ENCODE measurements at regions of chr16 and their contacts with region 1.

Region 1: GRCh38 chr16:89217388-89218191 is at the start of gene ZNF778:
- DNase-seq: peak; percentile 84
- H3K4me3 ChIP-seq: peak within 1 kb of the TSS; percentile 86 to 95 (median 90)
- H3K27ac ChIP-seq: peak within 1 kb of the TSS; percentile 67
- H3K4me1 ChIP-seq: peaks cover 13% of the 10 kb centered on the region
- H3K27me3 ChIP-seq: no peaks in the 10 kb centered on the region
- CTCF ChIP-seq: no peak
- total RNA-seq, gene ZNF778: 8.5 to 10.2 TPM

Region 2: DNA sequence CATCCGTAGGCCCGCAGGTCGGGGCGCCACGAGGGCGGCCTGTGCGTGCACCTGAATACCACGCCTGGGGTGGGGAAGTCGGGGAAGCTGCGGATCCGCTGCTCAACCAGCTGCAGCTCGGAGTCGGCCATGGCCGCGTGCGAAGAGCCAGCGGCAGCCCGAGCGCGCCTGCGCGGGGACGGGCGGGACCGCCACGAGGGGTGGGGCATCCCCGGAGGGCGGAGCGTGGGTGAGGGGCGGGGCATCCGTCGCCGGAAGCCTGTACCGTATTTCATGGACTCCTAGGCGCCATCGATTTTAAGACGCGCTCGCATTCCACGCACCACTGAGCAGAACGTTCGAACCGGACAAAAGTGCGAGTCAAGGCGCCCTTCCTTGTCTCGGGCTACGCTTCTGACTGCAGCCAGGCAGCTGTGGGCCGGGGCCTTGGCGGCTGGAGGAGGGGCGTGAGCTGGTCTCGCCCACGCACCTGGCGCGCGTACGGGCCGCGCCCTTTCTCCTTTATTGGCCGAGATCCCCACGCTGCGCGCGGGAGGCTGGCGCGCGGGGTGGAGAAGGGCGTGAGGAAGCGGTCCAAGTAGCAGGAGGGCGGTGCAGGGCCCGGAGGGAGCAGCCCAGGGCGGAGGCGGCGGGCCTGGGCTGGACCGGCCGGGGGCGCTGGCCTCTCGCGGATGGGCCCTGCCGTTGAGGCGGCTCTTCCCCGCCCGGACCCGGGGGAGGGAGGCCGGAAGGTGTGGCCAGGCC is 405.6 kb before region 1 on chr16 and contains the start of gene APRT:
- CTCF ChIA-PET with region 1: no interaction called
- dilution Hi-C with region 1: no loop called
- in situ Hi-C with region 1: no loop called
- intact Hi-C with region 1: loop called (anchors 1 kb)
- DNase-seq: peak; percentile 91
- H3K4me3 ChIP-seq: peak within 1 kb of the TSS; percentile 50 to 69 (median 67)
- H3K27ac ChIP-seq: peak within 1 kb of the TSS; percentile 14
- H3K4me1 ChIP-seq: peaks cover 29% of the 10 kb centered on the region
- H3K27me3 ChIP-seq: no peaks in the 10 kb centered on the region
- CTCF ChIP-seq: peak in 1 of 2 donors; percentile 38
- total RNA-seq, gene APRT: 51.5 to 136 TPM

Region 3: DNA sequence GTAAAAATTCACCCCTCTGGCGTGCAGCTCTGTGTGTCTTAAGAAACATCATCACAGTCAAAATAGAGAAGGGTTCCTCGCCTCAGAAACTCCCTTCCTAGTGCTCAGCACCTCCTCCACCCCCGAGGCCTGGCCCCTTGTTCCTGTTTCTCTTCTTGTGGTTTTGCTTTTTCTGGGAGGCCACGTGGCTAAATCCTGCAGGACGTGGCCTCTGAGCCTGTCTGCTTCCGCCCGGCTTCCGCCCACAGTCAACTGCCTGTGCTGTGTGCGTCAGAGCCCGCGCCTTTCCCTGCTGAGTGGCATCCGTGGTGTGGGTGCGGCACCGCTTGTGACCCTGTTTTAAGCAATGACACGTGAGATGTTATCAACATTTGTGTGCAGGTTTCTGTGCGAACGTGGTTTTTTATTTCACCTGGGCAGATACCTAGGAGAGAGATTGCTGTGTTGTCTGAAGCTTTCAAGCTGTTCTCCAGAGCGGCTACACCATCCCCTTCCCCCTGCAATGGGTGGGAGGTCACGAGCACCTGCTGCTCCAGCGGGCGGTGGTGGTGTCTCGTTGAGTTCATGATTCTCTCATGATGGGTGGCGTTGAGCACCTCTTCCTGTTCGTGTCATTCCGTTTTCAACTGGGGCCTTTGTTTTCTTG is 102.3 kb before region 1 on chr16:
- CTCF ChIA-PET with region 1: no interaction called
- dilution Hi-C with region 1: loop called (anchors 5 kb)
- in situ Hi-C with region 1: no loop called
- intact Hi-C with region 1: no loop called
- DNase-seq: peak; percentile 61
- H3K4me3 ChIP-seq: no peak overlapping the region
- H3K27ac ChIP-seq: no peak overlapping the region
- H3K4me1 ChIP-seq: peaks cover 17% of the 10 kb centered on the region
- H3K27me3 ChIP-seq: no peaks in the 10 kb centered on the region
- CTCF ChIP-seq: no peak

Region 4: GRCh38 chr16:89171463-89172170 is 46.0 kb before region 1 on chr16 and contains the start of gene CDH15:
- CTCF ChIA-PET with region 1: no interaction called
- dilution Hi-C with region 1: no loop called
- in situ Hi-C with region 1: no loop called
- intact Hi-C with region 1: loop called (anchors 1 kb)
- DNase-seq: peak; percentile 92
- H3K4me3 ChIP-seq: peak within 1 kb of the TSS in 2 of 3 experiments; percentile 23 to 42
- H3K27ac ChIP-seq: no peak within 1 kb of the TSS
- H3K4me1 ChIP-seq: peaks cover 26% of the 10 kb centered on the region
- H3K27me3 ChIP-seq: no peaks in the 10 kb centered on the region
- CTCF ChIP-seq: no peak
- total RNA-seq, gene CDH15: 0.14 to 0.33 TPM

Region 5: DNA sequence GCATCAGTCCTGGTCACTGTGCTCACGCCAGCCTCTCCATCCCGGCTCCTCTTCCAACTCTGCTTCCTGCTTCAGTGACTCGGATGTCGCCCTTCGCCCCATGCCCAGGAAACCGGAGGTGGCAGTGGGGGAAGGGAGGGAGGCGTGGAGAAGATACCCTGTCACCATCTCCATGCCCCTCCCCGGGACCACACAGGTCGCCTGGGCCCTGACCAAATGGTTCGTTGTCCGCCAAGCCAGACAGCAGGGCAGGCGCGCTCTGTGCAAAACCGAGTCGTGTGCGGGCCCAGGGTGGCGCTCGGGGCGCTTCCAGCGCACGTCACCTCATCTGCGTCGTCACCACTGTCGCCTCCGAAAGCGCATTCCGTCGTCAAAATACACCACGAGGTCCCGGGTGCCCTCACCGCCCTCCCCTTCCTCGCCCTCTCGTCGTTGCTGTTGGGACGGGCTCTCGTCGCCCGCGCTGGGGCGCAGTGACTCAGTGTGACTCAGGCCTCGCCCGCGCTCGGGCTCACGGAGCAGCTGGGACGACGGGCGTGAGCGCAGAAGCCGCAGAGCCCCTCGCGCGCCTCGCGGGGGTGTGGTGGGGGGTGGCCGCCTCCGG is 39.2 kb after region 1 on chr16:
- CTCF ChIA-PET with region 1: no interaction called
- dilution Hi-C with region 1: no loop called
- in situ Hi-C with region 1: no loop called
- intact Hi-C with region 1: no loop called
- DNase-seq: peak; percentile 41
- H3K4me3 ChIP-seq: peak overlapping the region in 1 of 3 experiments; percentile 24
- H3K27ac ChIP-seq: no peak overlapping the region
- H3K4me1 ChIP-seq: peaks cover 8% of the 10 kb centered on the region
- H3K27me3 ChIP-seq: no peaks in the 10 kb centered on the region
- CTCF ChIP-seq: no peak

Region 6: GRCh38 chr16:89289428-89290395 is 72.1 kb after region 1 on chr16:
- CTCF ChIA-PET with region 1: no interaction called
- dilution Hi-C with region 1: loop called (anchors 5 kb)
- in situ Hi-C with region 1: no loop called
- intact Hi-C with region 1: no loop called
- DNase-seq: peak; percentile 39
- H3K4me3 ChIP-seq: no peak overlapping the region
- H3K27ac ChIP-seq: no peak overlapping the region
- H3K4me1 ChIP-seq: no peaks in the 10 kb centered on the region
- H3K27me3 ChIP-seq: no peaks in the 10 kb centered on the region
- CTCF ChIP-seq: peak; percentile 80 to 84

Measured in mammary epithelial cell (primary cell).